ENCODE measurements at regions of chr10 and their contacts with region 1.

Region 1: DNA sequence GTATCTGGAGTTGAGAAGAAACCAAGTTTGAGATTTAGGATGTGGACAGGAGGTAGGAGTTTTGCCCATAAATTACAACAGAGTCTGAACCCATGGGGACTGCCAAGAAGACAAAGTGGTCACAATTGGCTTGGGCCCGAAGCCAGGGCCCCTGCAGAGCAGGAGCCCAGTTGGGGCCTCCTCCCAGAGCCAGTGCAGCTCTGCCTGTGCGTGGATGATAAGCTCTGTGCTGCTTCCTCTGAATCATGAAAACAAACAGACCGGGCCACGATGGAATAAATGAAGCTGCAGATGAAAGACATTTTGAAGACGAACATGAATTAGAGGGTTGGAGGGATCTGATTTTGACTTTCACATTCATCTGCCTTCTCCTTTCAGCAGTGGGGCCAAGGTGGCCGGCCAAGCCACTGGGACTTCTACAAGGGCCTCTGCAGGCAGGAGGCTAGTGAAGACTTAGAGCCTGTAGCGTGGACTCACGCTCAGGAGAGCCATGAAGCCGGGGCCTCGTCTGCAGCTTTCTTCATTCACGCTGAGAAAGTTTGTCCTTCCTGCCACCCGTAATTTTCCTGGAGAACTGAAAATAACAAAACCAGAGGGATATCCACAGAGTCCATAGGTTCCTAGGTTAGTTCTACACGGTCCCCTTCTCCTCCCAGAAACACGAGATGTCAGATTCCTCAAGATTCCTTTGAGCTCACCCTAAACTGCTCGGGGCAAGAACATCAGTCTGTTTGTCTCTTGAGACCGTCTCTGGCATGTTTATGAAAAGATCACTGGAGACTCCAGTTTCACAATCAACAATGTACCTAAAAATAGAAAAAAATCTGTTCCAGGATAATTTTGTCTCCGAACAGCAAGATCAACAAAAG is 156.7 kb upstream of the LYZL1 start:
- DNase-seq: peak; percentile 50 to 92 (median 74)
- ATAC-seq: peak; percentile 97
- H3K4me3 ChIP-seq: peak overlapping the region; percentile 4; the same call in 1 of the 2 replicates
- H3K27ac ChIP-seq: peak overlapping the region; percentile 70
- H3K4me1 ChIP-seq: peaks cover 15 to 29% of the 10 kb centered on the region in 2 experiments
- H3K27me3 ChIP-seq: no peaks in the 10 kb centered on the region
- CTCF ChIP-seq: no peak
- EP300 ChIP-seq: peak; percentile 91
- POLR2A ChIP-seq: no peak
- RAD21 ChIP-seq: peak; percentile 6 to 16; a peak in 1 of 4 replicates

Region 2: DNA sequence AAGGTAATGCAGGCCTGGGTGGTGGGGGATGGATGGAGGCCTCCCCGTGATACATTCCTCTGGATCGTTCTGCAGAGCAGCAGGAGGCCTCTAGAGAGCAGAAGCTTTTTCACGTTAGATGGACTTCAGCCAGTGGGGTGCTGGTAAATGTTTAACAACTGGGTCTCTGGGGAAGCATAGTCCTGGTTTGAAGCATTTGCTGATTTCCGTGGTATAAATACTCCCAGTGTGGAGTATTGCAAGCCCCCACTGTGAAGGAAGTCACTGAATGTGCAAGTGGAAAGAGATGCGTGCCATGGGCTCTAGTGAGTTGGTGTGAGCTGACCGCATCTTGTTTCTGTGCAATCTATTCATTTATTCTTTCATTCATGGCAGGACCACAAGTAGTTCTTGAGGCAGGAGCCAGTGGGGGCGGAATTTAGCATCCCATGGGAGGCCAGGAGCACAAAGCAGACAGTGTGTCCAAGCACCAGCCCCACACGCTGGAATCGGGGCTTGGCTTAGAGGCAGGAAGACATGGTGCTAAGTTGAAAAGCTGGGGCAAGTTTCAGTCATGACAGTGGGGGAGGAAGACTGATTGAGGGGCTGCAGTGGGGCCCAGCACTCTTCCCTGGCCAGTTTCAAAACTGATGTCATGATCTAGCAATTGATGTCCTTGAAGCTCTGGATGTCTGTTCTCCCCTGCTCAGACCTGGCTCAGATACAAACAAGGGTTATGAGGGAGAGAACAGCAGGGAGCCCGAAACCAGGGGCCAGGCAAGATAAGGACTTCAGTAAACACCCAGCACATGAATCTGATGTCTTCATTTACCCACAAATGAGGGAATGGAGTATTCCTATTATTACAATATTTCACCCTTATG is 124.2 kb before region 1 on chr10:
- CTCF ChIA-PET with region 1: no interaction called
- POLR2A ChIA-PET with region 1: no interaction called
- in situ Hi-C with region 1: no loop called
- intact Hi-C with region 1: loop called (anchors 5 kb)
- DNase-seq: peak in 2 of 4 experiments; percentile 30 to 55
- ATAC-seq: peak; percentile 68
- H3K4me3 ChIP-seq: no peak overlapping the region
- H3K27ac ChIP-seq: no peak overlapping the region
- H3K4me1 ChIP-seq: peaks cover 13 to 23% of the 10 kb centered on the region in 2 experiments; a peak in 4 of 5 replicates
- H3K27me3 ChIP-seq: no peaks in the 10 kb centered on the region; a peak in 1 of 5 replicates
- CTCF ChIP-seq: no peak
- EP300 ChIP-seq: peak; percentile 68
- POLR2A ChIP-seq: no peak
- RAD21 ChIP-seq: no peak

Region 3: DNA sequence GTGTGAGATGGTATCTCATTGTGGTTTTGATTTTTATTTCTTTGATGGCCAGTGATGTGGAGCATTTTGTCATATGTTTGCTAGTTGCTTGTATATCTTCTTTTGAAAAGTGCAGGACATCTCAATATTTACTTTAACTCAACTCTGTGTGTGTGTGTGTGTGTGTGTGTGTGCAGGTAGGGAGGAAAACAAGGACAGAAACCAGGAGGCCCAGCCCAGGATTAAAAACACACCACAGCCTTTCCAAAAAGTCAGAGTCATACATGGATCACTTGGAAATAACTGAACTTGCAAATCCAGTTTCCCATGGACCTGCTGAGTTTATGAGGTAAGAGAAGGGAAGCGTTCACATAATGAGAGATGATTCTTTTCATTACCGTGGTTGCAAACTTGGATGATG is 33.2 kb before region 1 on chr10:
- CTCF ChIA-PET with region 1: no interaction called
- POLR2A ChIA-PET with region 1: no interaction called
- in situ Hi-C with region 1: no loop called
- intact Hi-C with region 1: no loop called
- DNase-seq: no peak
- ATAC-seq: no peak
- H3K4me3 ChIP-seq: no peak overlapping the region
- H3K27ac ChIP-seq: no peak overlapping the region
- H3K4me1 ChIP-seq: no peaks in the 10 kb centered on the region
- H3K27me3 ChIP-seq: peaks cover 9 to 27% of the 10 kb centered on the region in 2 experiments; a peak in 4 of 5 replicates
- CTCF ChIP-seq: no peak
- EP300 ChIP-seq: no peak
- POLR2A ChIP-seq: no peak
- RAD21 ChIP-seq: no peak

Region 4: GRCh38 chr10:29142516-29143314 is 10.5 kb after region 1 on chr10:
- CTCF ChIA-PET with region 1: no interaction called
- POLR2A ChIA-PET with region 1: interaction called, 10 read pairs
- in situ Hi-C with region 1: no loop called
- intact Hi-C with region 1: no loop called
- DNase-seq: peak; percentile 30 to 64 (median 36)
- ATAC-seq: peak; percentile 95
- H3K4me3 ChIP-seq: peak overlapping the region; percentile 22; the same call in 1 of the 2 replicates
- H3K27ac ChIP-seq: no peak overlapping the region; the same call in 2 of the 3 replicates
- H3K4me1 ChIP-seq: peaks cover 0 to 8% of the 10 kb centered on the region in 2 experiments; a peak in 3 of 5 replicates
- H3K27me3 ChIP-seq: peaks cover 2 to 10% of the 10 kb centered on the region in 2 experiments; a peak in 4 of 5 replicates
- CTCF ChIP-seq: peak; percentile 34 to 57 (median 57); a peak in 4 of 6 replicates
- EP300 ChIP-seq: no peak
- POLR2A ChIP-seq: no peak
- RAD21 ChIP-seq: peak; percentile 47 to 65; a peak in 3 of 4 replicates